Mammary epithelial cell (primary cell): ENCODE measurements at regions of chr2 and their contacts with region 1.

Region 1: GRCh38 chr2:26757873-26758789 is 6.0 kb upstream of the SLC35F6 start:
- DNase-seq: peak; percentile 98
- H3K4me3 ChIP-seq: no peak overlapping the region
- H3K27ac ChIP-seq: peak overlapping the region; percentile 80
- H3K4me1 ChIP-seq: peaks cover 16% of the 10 kb centered on the region
- H3K27me3 ChIP-seq: no peaks in the 10 kb centered on the region
- CTCF ChIP-seq: no peak

Region 2: DNA sequence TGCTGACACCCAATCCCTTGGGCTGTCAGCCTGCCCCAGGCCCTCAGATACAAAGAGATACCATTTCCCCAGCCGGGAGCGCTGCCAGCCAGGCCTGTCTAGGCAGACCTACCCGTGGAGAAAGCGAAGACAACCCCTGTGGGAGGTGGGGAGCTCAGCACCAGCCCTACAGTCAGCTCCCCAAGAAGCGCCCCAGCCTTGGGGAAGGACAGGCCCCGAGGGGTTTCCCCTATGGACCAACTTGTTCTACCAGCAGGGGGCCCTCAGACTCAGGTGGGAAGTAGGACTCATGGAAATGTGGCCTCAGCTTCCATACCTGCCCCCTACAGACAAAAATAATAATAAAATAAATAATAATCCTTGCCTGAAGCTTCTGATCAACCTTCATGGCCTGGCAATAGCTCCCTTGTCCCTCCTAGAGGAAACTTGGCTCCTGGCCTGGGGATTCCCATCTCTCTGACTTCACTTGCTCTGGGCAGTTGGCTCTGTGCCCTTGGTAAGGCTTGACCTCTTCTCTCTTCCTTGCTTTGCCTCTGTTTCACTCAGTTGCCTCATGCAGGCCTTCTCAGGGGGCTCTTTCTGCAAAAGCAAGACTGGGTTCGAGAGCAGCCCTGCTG is 13.0 kb after region 1 on chr2:
- CTCF ChIA-PET with region 1: no interaction called
- dilution Hi-C with region 1: no loop called
- in situ Hi-C with region 1: no loop called
- intact Hi-C with region 1: loop called (anchors 1 kb)
- DNase-seq: peak; percentile 83
- H3K4me3 ChIP-seq: no peak overlapping the region
- H3K27ac ChIP-seq: peak overlapping the region; percentile 6
- H3K4me1 ChIP-seq: peaks cover 45% of the 10 kb centered on the region
- H3K27me3 ChIP-seq: no peaks in the 10 kb centered on the region
- CTCF ChIP-seq: peak; percentile 42 to 54